Pancreas (tissue), 10 donors: ENCODE measurements at regions of chr17 and their contacts with region 1.

Region 1: DNA sequence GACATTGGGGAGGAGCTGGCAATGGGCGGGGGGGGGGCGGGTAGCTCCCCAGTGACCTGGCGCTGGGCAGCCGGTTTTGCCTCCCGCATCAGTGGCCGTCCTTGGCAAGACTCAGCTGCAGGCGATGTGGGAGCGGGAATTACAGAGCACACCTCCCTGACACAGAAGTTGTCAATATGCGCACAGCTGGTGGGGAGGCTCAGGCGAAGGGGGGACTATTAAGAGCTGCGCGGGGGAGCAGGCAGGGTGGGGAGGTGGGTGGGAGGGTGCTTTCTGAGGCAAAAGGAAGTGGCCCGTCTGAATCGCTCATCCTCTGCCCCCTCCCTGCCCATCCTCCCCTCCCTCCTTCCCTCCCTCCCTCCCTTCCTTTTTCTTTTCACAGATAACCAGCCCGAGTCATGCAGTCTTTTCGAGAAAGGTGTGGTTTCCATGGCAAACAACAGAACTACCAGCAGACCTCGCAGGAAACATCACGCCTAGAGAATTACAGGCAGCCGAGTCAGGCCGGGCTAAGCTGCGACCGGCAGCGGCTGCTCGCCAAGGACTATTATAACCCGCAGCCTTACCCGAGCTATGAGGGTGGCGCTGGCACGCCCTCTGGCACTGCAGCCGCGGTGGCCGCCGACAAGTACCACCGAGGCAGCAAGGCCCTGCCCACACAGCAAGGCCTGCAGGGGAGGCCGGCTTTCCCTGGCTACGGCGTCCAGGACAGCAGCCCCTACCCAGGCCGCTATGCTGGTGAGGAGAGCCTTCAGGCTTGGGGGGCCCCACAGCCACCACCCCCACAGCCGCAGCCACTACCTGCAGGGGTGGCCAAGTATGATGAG is 44.0 kb downstream of the SREBF1 start:
- DNase-seq: peak in 2 of 6 donors; percentile 34 to 69
- ATAC-seq: peak in 3 of 4 donors; percentile 55 to 68 (median 63)
- H3K4me3 ChIP-seq: no peak overlapping the region
- H3K27ac ChIP-seq: peak overlapping the region in 1 of 4 donors; percentile 17
- H3K4me1 ChIP-seq: no peaks in the 10 kb centered on the region
- H3K27me3 ChIP-seq: no peaks in the 10 kb centered on the region
- CTCF ChIP-seq: no peak

Region 2: GRCh38 chr17:17675925-17676534 is 116.7 kb before region 1 on chr17:
- intact Hi-C with region 1: loop called in 1 of 3 experiments (anchors 10 kb)
- DNase-seq: no peak
- ATAC-seq: peak; percentile 13 to 56 (median 38)
- H3K4me3 ChIP-seq: no peak overlapping the region
- H3K27ac ChIP-seq: no peak overlapping the region
- H3K4me1 ChIP-seq: no peaks in the 10 kb centered on the region
- H3K27me3 ChIP-seq: no peaks in the 10 kb centered on the region
- CTCF ChIP-seq: no peak